Adrenal gland (tissue), 19 donors: ENCODE measurements at regions of chr7 and their contacts with region 1.

Region 1: GRCh38 chr7:101815835-101816493 is 1.5 kb upstream of the CUX1 start:
- DNase-seq: peak; percentile 66 to 84 (median 75)
- H3K4me3 ChIP-seq: peak overlapping the region in 2 of 4 donors; percentile 31 to 86
- H3K27ac ChIP-seq: peak overlapping the region in 3 of 5 donors; percentile 59 to 90 (median 78)
- H3K4me1 ChIP-seq: peaks cover 0 to 9% of the 10 kb centered on the region in 2 donors
- H3K27me3 ChIP-seq: no peaks in the 10 kb centered on the region
- CTCF ChIP-seq: peak in 1 of 6 experiments; percentile 40
- POLR2A ChIP-seq: peak in 1 of 2 donors; percentile 52

Region 2: GRCh38 chr7:101743241-101743994 is 72.5 kb before region 1 on chr7:
- intact Hi-C with region 1: loop called in 1 of 2 experiments (anchors 5 kb)
- DNase-seq: peak; percentile 29 to 58 (median 47)
- H3K4me3 ChIP-seq: peak overlapping the region in 2 of 4 donors; percentile 44 to 55
- H3K27ac ChIP-seq: no peak overlapping the region
- H3K4me1 ChIP-seq: peaks cover 3 to 7% of the 10 kb centered on the region in 2 donors
- H3K27me3 ChIP-seq: peaks cover 3% of the 10 kb centered on the region
- CTCF ChIP-seq: peak in 5 of 6 experiments; percentile 15 to 50 (median 22)
- POLR2A ChIP-seq: no peak

Region 3: GRCh38 chr7:102220960-102221800 is 405.2 kb after region 1 on chr7:
- intact Hi-C with region 1: loop called in 1 of 2 experiments (anchors 10 kb)
- DNase-seq: no peak
- H3K4me3 ChIP-seq: no peak overlapping the region
- H3K27ac ChIP-seq: no peak overlapping the region
- H3K4me1 ChIP-seq: peaks cover 3 to 8% of the 10 kb centered on the region in 2 donors
- H3K27me3 ChIP-seq: no peaks in the 10 kb centered on the region
- CTCF ChIP-seq: no peak
- POLR2A ChIP-seq: no peak

Region 4: GRCh38 chr7:102236592-102237287 is 420.8 kb after region 1 on chr7:
- intact Hi-C with region 1: loop called in 1 of 2 experiments (anchors 5 kb)
- DNase-seq: peak; percentile 43 to 83 (median 69)
- H3K4me3 ChIP-seq: no peak overlapping the region
- H3K27ac ChIP-seq: no peak overlapping the region
- H3K4me1 ChIP-seq: no peaks in the 10 kb centered on the region
- H3K27me3 ChIP-seq: no peaks in the 10 kb centered on the region
- CTCF ChIP-seq: peak; percentile 69 to 84 (median 77)
- POLR2A ChIP-seq: no peak